Activated T-helper 2 cell treated with anti-CD3 and anti-CD28 coated beads, Interferon-gamma antibody, Interleukin-2, Interleukin-4, amounts not matched to agents 10 μg/mL and 5 μg/mL and 100 μg/mL, durations not matched to agents 14 hours and 24 hours and 36 hours (primary cell): ENCODE measurements at regions of chr16 and their contacts with region 1.

Region 1: GRCh38 chr16:89507834-89508590 is at the start of gene SPG7:
- DNase-seq: peak; percentile 91
- H3K4me3 Mint-ChIP-seq: peak within 1 kb of the TSS; percentile 90
- H3K27ac Mint-ChIP-seq: peak within 1 kb of the TSS; percentile 90
- H3K4me1 Mint-ChIP-seq: peaks cover 24% of the 10 kb centered on the region
- H3K27me3 Mint-ChIP-seq: no peaks in the 10 kb centered on the region
- total RNA-seq, gene SPG7: 115 and 125 TPM in 2 replicates

Region 2: DNA sequence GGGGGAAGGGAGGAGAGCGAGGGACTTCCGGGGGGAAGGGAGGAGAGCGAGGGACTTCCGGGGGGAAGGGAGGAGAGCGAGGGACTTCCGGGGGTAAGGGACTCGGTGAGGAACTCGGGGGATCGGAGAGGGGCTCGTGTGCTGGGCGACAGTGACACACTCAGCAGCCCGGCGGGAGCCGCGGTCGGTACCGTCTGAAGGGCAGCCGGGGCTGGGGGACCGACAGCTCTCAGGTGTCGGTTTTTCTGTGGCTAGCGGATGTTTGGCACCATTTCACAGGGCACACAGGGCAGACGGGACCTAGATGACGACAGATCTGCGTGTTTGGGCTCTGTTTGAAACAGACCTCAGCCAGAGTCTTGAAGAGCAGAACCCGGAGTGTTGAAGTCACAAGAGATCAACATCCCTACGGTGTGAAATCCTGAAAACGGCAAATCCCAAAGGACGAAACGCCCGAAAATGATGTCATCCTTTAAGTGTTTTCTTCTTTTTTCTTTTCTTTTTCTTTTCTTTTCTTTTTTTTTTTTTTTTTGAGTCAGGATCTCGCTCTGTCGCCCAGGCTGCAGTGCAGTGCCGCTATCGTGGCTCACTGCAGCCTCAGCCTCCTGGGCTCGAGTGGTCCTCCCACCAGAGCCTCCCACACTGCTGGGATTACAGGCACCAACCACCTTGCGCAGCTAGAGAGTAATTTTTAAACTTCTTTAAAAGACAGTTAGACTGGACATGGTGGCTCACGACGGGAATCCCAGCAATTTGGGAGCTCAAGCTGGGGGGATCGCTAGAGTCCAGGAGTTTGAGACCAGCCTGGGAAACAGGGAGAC is 266.6 kb before region 1 on chr16:
- intact Hi-C with region 1: loop called (anchors 5 kb)
- DNase-seq: peak; percentile 78
- H3K4me3 Mint-ChIP-seq: peak overlapping the region; percentile 97
- H3K27ac Mint-ChIP-seq: peak overlapping the region; percentile 98
- H3K4me1 Mint-ChIP-seq: peaks cover 10% of the 10 kb centered on the region
- H3K27me3 Mint-ChIP-seq: no peaks in the 10 kb centered on the region

Region 3: GRCh38 chr16:89325861-89326471 is 182.0 kb before region 1 on chr16:
- intact Hi-C with region 1: loop called (anchors 2 kb)
- DNase-seq: no peak
- H3K4me3 Mint-ChIP-seq: peak overlapping the region; percentile 13
- H3K27ac Mint-ChIP-seq: peak overlapping the region; percentile 67
- H3K4me1 Mint-ChIP-seq: peaks cover 73% of the 10 kb centered on the region
- H3K27me3 Mint-ChIP-seq: no peaks in the 10 kb centered on the region

Region 4: GRCh38 chr16:89361751-89362539 is 146.1 kb before region 1 on chr16:
- intact Hi-C with region 1: loop called (anchors 1 kb)
- DNase-seq: no peak
- H3K4me3 Mint-ChIP-seq: peak overlapping the region; percentile 62
- H3K27ac Mint-ChIP-seq: peak overlapping the region; percentile 86
- H3K4me1 Mint-ChIP-seq: peaks cover 88% of the 10 kb centered on the region
- H3K27me3 Mint-ChIP-seq: no peaks in the 10 kb centered on the region

Region 5: DNA sequence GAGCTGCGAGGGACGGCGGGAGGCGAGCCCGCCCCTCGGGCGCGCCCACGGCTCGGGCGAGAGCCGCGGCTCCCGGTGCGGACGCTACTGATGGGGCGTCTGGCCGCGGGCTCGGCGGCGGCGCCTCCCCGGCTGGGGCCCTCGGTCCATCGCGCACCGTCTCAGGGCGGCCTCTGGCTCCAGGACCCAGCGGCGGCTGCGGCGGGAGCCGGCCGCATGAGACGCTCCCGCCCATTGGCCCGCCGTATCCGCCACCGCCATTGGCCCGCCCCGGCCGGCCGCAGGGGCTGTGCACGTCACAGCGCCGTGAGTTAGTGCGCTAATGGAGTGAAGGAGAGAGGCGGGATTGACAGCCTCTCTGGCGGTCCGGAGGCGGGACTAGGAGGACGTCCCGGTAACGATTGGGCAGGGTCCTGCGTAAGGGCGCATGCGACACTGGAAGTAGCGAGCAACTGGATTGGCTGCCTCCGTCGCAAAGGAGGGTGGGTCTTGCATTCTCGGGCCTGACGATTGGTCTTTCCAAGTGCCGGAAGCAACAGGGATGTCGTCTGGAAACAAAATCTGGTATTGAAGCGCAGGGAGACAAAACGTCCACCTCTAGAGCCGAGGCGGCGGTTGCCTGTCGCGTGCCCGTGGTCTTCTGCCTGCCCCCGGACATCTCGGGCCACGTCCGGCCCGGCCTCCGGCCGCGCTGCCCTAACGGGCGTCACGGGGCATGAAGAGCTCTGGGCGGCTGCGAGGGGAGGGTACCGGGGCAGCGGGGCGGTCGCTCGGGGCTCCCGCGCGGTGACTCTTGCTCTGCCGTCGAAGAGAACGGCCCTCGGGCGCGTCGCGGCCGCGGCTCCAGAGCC is 17.4 kb before region 1 on chr16 and contains the start of gene ANKRD11:
- intact Hi-C with region 1: loop called (anchors 1 kb)
- DNase-seq: peak; percentile 99
- H3K4me3 Mint-ChIP-seq: peak within 1 kb of the TSS; percentile 87
- H3K27ac Mint-ChIP-seq: peak within 1 kb of the TSS; percentile 89
- H3K4me1 Mint-ChIP-seq: peaks cover 42% of the 10 kb centered on the region
- H3K27me3 Mint-ChIP-seq: no peaks in the 10 kb centered on the region
- total RNA-seq, gene ANKRD11: 142 and 144 TPM in 2 replicates

Region 6: DNA sequence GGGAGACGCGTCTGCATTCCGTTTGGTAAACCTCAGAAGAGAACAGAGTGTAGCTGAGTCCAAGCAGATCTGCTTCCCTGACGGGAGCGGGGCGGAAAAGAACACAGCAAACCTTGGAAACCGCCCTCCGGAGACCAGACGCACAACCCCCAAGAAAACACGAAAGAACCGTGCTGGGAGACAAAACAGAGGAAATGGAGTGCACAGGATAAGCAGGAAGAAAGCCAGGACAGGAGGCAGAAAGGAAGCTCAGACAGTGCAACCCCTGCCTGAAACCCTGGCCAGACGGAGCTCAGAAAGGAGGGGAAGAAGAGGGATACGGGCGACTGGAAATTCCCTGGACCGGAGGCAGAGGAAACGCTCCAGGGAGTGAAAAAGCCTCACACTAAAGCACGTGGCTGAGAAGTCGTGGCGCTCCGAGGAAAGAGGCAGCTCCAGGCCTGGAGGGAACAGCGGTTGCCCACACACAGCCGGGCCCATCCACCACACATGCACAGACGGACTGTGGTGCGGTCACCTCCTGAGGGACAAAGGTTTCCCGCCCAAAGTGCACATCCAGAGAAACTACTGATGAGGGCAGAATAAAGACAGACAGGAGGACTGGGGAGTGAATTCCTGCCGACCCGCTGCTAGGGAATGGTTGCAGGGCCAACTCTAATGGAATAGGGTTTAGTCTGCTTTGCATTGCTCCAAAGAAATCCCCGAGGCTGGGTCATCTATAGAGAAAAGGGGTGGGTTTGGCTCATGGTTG is 115.7 kb after region 1 on chr16:
- intact Hi-C with region 1: no loop called
- DNase-seq: no peak
- H3K4me3 Mint-ChIP-seq: no peak overlapping the region
- H3K27ac Mint-ChIP-seq: no peak overlapping the region
- H3K4me1 Mint-ChIP-seq: no peaks in the 10 kb centered on the region
- H3K27me3 Mint-ChIP-seq: peaks cover 19% of the 10 kb centered on the region